ENCODE measurements at regions of chr16 and their contacts with region 1.

Region 1: GRCh38 chr16:10964039-10964890 is 19.9 kb downstream of the CLEC16A start:
- DNase-seq: no peak
- ATAC-seq: peak; percentile 62
- H3K4me3 ChIP-seq: peak overlapping the region; percentile 18; the same call in 1 of the 2 replicates
- H3K27ac ChIP-seq: peak overlapping the region; percentile 99
- H3K4me1 ChIP-seq: peaks cover 35% of the 10 kb centered on the region
- H3K27me3 ChIP-seq: no peaks in the 10 kb centered on the region
- CTCF ChIP-seq: peak; percentile 94 to 98 (median 98); a peak in 5 of 6 replicates
- EP300 ChIP-seq: peak; percentile 35 to 38; a peak in 2 of 4 replicates
- POLR2A ChIP-seq: peak; percentile 34; the same call in 1 of the 2 replicates
- RAD21 ChIP-seq: peak; percentile 87

Region 2: DNA sequence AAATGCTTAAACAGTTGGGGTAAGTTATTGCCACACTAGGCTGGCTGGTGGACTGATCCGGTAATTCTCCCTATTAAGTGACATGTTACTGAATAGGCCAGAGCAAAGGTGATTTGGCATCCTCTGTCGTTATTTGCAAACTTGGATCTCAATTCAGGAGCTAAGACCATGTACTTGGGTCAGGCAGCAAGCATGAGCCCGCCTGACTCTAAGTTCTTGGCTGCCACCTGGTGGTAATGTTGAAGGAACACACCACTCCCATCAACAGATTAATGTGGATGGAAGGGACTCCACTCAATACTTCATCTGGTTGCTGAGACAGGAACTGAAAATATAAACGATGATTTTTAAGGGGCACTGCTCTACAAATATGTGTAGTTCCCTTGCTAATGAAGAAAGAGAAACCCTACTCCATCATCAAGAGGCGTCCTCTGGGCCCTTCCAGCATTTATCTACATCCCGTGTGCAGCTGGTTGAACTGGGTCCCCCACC is 454.7 kb before region 1 on chr16:
- CTCF ChIA-PET with region 1: interaction called, 4 read pairs
- POLR2A ChIA-PET with region 1: no interaction called
- RAD21 ChIA-PET with region 1: interaction called, 10 read pairs
- SMC1A ChIA-PET with region 1: interaction called, 4 read pairs
- in situ Hi-C with region 1: no loop called
- intact Hi-C with region 1: no loop called
- DNase-seq: peak; percentile 70
- ATAC-seq: peak; percentile 99
- H3K4me3 ChIP-seq: no peak overlapping the region
- H3K27ac ChIP-seq: no peak overlapping the region
- H3K4me1 ChIP-seq: peaks cover 3% of the 10 kb centered on the region; the same call in 1 of the 2 replicates
- H3K27me3 ChIP-seq: no peaks in the 10 kb centered on the region
- CTCF ChIP-seq: peak; percentile 77 to 92 (median 86)
- EP300 ChIP-seq: no peak
- POLR2A ChIP-seq: no peak
- RAD21 ChIP-seq: peak; percentile 97

Region 3: DNA sequence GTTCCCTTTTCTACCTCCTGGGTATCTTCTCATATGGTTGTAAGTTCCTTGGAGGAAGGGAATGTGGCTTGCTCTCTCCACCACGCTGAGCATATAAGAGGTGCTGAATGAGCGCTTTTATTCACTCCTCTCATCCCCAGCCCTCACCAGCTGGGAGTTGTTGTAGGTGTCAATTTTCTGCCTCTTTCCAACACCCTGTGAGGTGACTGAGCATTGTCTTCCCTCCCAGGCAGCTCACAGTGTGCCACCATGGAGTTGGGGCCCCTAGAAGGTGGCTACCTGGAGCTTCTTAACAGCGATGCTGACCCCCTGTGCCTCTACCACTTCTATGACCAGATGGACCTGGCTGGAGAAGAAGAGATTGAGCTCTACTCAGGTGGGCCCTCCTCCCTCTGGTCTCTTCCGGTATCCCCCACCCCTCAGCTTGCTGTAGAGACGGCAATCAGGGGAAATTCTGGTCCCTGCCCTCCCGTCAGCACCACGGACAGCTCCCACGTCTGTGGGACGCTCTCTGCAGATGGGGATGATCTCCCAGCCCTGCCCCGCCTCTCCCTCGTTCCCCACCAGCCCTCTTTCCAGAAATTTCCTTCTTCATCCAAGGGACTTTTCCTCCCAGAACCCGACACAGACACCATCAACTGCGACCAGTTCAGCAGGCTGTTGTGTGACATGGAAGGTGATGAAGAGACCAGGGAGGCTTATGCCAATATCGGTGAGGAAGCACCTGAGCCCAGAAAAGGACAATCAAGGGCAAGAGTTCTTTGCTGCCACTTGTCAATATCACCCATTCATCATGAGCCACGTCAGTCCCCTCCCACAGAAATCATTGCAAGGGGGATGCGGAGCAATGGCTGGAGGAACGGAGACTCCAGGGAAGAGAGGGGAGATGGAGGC is 69.0 kb before region 1 on chr16:
- CTCF ChIA-PET with region 1: no interaction called
- POLR2A ChIA-PET with region 1: no interaction called
- RAD21 ChIA-PET with region 1: no interaction called
- SMC1A ChIA-PET with region 1: no interaction called
- in situ Hi-C with region 1: no loop called
- intact Hi-C with region 1: no loop called
- DNase-seq: no peak
- ATAC-seq: no peak
- H3K4me3 ChIP-seq: no peak overlapping the region
- H3K27ac ChIP-seq: no peak overlapping the region
- H3K4me1 ChIP-seq: peaks cover 68% of the 10 kb centered on the region
- H3K27me3 ChIP-seq: no peaks in the 10 kb centered on the region
- CTCF ChIP-seq: no peak
- EP300 ChIP-seq: no peak
- POLR2A ChIP-seq: no peak
- RAD21 ChIP-seq: no peak

Region 4: DNA sequence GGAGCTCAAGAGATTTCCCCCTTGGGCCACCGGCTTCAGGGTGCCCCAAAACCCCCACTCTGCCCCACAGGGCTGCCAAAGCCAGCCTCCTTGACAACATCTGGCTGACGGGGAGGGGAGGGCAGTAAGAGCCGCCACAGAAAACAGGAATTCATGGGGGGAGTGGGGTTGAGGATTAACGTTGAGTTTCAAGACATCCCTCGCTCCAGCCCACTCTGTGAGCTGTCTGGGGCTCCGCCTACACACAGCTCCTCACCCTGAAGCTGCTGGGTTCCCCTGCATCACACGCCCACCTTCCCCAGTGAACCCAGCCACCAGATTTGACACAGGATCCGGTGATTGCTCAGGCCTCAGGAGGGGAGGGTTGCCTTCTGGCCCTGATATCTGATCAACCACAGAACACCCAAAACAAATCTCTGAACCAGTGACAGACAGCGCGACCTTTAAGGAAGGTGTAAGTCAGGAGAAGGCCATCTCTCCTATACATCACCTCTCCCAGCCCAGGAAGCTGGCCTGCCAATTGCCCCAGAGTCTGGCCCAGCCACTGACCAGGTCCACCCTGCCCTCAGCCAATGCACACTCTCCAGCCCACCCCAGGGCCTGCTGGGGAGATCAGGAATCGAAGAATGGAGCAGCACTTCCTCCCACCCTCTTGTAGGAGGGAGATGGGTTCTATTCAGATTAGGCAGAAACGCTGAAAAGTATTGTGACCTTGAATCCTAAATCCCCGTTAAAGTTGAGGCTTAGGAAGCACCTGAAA is 112.2 kb after region 1 on chr16:
- CTCF ChIA-PET with region 1: interaction called, 6 read pairs
- POLR2A ChIA-PET with region 1: no interaction called
- RAD21 ChIA-PET with region 1: interaction called, 12 read pairs
- SMC1A ChIA-PET with region 1: interaction called, 16 read pairs
- in situ Hi-C with region 1: no loop called
- intact Hi-C with region 1: loop called (anchors 2 kb)
- DNase-seq: peak; percentile 79
- ATAC-seq: peak; percentile 64
- H3K4me3 ChIP-seq: no peak overlapping the region
- H3K27ac ChIP-seq: peak overlapping the region; percentile 65
- H3K4me1 ChIP-seq: peaks cover 46% of the 10 kb centered on the region
- H3K27me3 ChIP-seq: no peaks in the 10 kb centered on the region
- CTCF ChIP-seq: no peak
- EP300 ChIP-seq: 0 out of 4 replicates have a peak, but pooled peaks of 1 of the 2 experiments have one; percentile 10
- POLR2A ChIP-seq: no peak
- RAD21 ChIP-seq: no peak

Region 5: DNA sequence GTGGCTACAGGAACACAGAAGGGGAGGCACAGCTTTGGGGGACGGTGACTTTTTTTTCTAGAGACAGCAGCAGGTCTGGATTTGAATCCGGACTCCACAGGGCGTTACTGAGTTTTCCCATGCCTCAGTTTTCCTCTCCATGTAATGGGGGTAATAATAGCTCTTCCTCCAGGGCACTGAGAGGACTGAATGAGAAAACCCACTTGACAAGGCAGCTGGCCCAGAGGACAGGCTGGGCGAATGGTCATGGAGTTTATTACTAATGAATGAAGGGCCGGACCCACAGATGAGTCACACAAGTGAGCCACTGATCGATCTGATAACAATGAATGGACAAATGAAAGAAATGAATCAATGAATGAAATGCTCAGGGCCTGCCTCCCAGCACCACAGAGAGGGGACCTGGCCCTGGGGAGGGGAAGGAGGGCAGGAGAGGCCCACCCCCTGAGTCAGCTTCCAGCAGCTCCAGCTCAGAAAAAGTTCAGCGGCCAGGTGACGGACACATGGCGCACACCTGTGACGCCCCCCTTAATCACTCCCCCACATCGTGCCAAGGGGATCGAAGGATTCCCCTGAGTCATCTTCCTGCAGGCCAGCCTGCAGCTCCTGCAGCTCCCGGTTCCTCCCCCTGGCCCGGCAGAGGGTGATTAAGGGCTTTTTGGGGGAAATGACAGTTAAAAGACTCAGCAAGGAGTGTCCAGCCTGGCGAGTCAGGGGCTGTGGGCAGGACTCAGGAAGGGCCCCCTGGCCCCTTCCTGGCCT is 237.4 kb after region 1 on chr16:
- CTCF ChIA-PET with region 1: interaction called, 4 read pairs
- POLR2A ChIA-PET with region 1: no interaction called
- RAD21 ChIA-PET with region 1: interaction called, 12 read pairs
- SMC1A ChIA-PET with region 1: interaction called, 6 read pairs
- in situ Hi-C with region 1: no loop called
- intact Hi-C with region 1: loop called (anchors 2 kb)
- DNase-seq: no peak
- ATAC-seq: peak; percentile 5
- H3K4me3 ChIP-seq: no peak overlapping the region
- H3K27ac ChIP-seq: peak overlapping the region; percentile 45
- H3K4me1 ChIP-seq: peaks cover 67% of the 10 kb centered on the region
- H3K27me3 ChIP-seq: no peaks in the 10 kb centered on the region
- CTCF ChIP-seq: no peak
- EP300 ChIP-seq: peak in 1 of 2 experiments; percentile 28; a peak in 1 of 4 replicates
- POLR2A ChIP-seq: no peak
- RAD21 ChIP-seq: no peak

Region 6: GRCh38 chr16:11356573-11357331 is 392.5 kb after region 1 on chr16:
- CTCF ChIA-PET with region 1: interaction called, 40 read pairs
- POLR2A ChIA-PET with region 1: interaction called, 5 read pairs
- RAD21 ChIA-PET with region 1: interaction called, 37 read pairs
- SMC1A ChIA-PET with region 1: interaction called, 20 read pairs
- in situ Hi-C with region 1: loop called (anchors 5 kb)
- intact Hi-C with region 1: loop called (anchors 1 kb)
- DNase-seq: no peak
- ATAC-seq: peak; percentile 42
- H3K4me3 ChIP-seq: no peak overlapping the region
- H3K27ac ChIP-seq: no peak overlapping the region
- H3K4me1 ChIP-seq: peaks cover 44% of the 10 kb centered on the region
- H3K27me3 ChIP-seq: no peaks in the 10 kb centered on the region
- CTCF ChIP-seq: peak; percentile 70 to 88 (median 74); a peak in 5 of 6 replicates
- EP300 ChIP-seq: no peak
- POLR2A ChIP-seq: no peak
- RAD21 ChIP-seq: peak; percentile 88

Region 7: DNA sequence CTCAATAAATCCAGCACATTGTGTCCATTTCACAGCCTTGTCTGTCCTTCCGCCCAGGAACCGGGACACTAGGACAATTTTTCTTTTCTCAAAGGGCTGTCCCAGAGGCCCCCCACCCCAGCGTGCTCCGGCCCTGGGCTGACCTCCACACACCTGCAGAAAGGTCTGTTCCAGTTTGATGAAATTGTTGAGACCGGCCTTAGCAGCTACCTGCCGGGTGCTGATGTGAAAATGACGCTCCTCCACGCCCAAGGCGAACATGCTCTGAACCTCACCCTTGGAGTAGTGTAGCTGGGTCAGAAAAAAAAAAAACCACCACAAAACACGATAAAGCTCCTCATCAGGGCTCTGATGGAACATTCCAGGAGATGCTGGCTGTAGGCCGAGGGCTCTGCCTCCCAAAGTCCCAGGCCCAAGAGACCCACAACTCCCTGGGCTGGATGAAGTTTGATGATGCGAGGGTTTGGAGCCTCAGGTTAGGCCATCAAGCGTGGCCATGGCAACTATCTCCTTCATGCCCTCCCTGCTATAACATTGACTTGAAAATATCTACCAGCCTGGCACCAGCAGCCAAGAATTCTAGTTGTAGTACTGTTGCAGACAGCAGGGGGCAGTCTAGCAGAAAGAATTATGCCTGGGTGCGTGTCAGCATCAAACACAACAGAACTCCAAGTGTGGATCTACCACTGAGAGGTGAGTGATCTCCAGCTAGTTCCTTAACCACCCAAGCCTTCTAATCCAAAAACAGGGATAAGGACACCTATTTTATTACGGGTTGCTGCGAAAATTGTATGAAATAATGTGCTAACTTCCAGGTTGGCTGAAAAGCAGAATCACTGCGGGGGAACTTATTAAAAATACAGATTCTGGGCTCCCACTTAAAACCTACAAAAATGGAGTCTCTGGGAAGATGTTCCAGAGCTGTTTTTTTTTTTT is 443.1 kb after region 1 on chr16:
- CTCF ChIA-PET with region 1: interaction called, 33 read pairs
- POLR2A ChIA-PET with region 1: no interaction called
- RAD21 ChIA-PET with region 1: interaction called, 27 read pairs
- SMC1A ChIA-PET with region 1: interaction called, 22 read pairs
- in situ Hi-C with region 1: no loop called
- intact Hi-C with region 1: loop called (anchors 5 kb)
- DNase-seq: peak; percentile 45
- ATAC-seq: peak; percentile 74
- H3K4me3 ChIP-seq: no peak overlapping the region
- H3K27ac ChIP-seq: no peak overlapping the region
- H3K4me1 ChIP-seq: no peaks in the 10 kb centered on the region
- H3K27me3 ChIP-seq: no peaks in the 10 kb centered on the region; a peak in 2 of 4 replicates
- CTCF ChIP-seq: peak; percentile 75 to 86 (median 83)
- EP300 ChIP-seq: no peak
- POLR2A ChIP-seq: no peak
- RAD21 ChIP-seq: peak; percentile 88

Measured in GM12878 (cell line).